Activated CD8-positive, alpha-beta T cell treated with anti-CD3 and anti-CD28 coated beads, Interleukin-2, amount 10 ng/mL, durations not matched to agents 7 days and 5 days (primary cell): ENCODE measurements at regions of chr1 and their contacts with region 1.

Region 1: DNA sequence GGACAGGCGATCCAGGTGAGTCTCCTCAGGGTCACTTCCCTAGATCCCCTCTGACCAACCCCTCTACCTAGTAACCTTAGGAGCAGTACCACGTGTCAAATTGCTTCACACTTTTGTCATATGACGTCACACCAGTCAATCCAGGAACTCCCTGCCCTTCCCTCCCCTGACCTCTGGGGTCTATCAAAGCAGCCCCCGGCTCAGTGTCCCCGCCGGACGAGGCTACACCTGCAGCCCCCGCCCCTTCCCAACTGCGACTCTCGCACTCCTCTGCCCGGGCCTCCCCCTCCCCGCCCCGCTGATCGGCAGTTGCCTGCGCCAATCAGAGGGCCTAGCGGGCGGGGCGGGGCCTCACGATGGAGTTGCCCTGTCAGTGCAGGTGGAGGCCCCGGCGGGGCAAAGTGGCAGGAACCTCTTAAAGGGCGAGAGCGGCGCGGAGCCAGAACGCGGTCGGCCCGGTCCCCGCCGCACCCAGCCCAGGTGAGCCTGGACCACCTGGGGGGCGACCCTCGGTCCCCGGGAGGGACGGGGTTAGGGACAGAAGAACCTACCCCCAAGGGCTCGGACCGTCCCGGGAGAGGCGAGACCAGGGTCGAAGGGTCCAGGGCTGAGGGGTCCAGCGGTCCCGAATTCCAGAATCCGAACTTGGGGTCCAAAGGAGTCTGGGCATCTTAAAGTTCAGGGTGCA is 27.5 kb upstream of the EPB41 start:
- DNase-seq: peak; percentile 92
- ATAC-seq: peak; percentile 81
- H3K4me3 Mint-ChIP-seq: peak overlapping the region; percentile 80
- H3K27ac Mint-ChIP-seq: peak overlapping the region; percentile 97
- H3K4me1 Mint-ChIP-seq: peaks cover 56% of the 10 kb centered on the region
- H3K27me3 Mint-ChIP-seq: no peaks in the 10 kb centered on the region

Region 2: GRCh38 chr1:28341591-28341990 is 545.3 kb before region 1 on chr1:
- CTCF ChIA-PET with region 1: no interaction called
- POLR2A ChIA-PET with region 1: no interaction called
- DNase-seq: no peak
- ATAC-seq: no peak
- H3K4me3 Mint-ChIP-seq: no peak overlapping the region
- H3K27ac Mint-ChIP-seq: no peak overlapping the region
- H3K4me1 Mint-ChIP-seq: peaks cover 20% of the 10 kb centered on the region
- H3K27me3 Mint-ChIP-seq: no peaks in the 10 kb centered on the region

Region 3: GRCh38 chr1:28775121-28775944 is 111.5 kb before region 1 on chr1:
- CTCF ChIA-PET with region 1: interaction called, 167 read pairs
- POLR2A ChIA-PET with region 1: no interaction called
- DNase-seq: peak; percentile 71
- ATAC-seq: peak; percentile 95
- H3K4me3 Mint-ChIP-seq: peak overlapping the region; percentile 63
- H3K27ac Mint-ChIP-seq: peak overlapping the region; percentile 43
- H3K4me1 Mint-ChIP-seq: peaks cover 11% of the 10 kb centered on the region
- H3K27me3 Mint-ChIP-seq: peaks cover 3% of the 10 kb centered on the region

Region 4: DNA sequence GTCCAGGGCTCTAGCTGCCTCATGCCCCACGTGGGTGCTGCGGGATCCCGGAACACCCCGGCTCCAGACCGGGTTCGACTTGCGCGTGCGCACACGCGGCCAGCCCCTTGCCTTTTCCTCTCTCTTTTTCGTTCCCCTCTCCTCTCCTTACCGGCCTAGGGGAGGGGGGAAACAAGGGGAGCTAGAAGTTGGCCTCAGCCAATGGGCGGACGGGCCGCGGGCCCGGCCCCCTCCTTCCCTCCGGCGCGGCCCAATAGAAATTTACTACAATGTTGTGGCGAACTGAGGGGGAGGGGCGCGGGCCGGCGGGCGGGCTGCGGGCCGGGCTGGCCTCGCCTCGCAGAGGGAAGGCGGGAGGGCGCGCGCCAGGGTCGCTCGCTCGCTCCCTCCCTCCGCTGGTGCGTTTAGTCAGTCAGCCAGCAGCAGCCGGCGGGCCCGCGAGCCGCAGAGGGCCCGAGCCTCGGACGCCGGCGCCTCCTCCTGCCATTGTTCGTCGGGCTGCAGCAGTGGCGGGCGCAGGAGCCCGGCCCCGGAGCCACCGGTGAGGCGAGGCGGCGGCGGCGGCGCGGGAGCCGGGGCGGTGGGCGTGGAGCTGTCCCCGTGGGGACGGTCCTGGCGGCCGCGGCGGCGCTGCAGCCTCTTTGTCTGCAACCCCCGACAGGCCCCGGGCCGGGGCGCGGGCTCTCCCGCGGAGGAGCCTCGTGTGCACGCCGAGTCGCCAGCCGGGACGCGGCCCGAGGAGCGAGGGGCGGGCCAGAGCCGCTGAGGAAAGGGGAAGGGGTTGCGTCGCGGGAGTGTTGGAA is 27.6 kb after region 1 on chr1 and contains the start of gene EPB41:
- CTCF ChIA-PET with region 1: interaction called, 11 read pairs
- POLR2A ChIA-PET with region 1: interaction called, 15 read pairs
- DNase-seq: peak; percentile 94
- ATAC-seq: peak; percentile 89
- H3K4me3 Mint-ChIP-seq: peak within 1 kb of the TSS; percentile 96
- H3K27ac Mint-ChIP-seq: peak within 1 kb of the TSS; percentile 94
- H3K4me1 Mint-ChIP-seq: peaks cover 41% of the 10 kb centered on the region
- H3K27me3 Mint-ChIP-seq: no peaks in the 10 kb centered on the region
- total RNA-seq, gene EPB41: 94.5 to 95.4 TPM

Region 5: DNA sequence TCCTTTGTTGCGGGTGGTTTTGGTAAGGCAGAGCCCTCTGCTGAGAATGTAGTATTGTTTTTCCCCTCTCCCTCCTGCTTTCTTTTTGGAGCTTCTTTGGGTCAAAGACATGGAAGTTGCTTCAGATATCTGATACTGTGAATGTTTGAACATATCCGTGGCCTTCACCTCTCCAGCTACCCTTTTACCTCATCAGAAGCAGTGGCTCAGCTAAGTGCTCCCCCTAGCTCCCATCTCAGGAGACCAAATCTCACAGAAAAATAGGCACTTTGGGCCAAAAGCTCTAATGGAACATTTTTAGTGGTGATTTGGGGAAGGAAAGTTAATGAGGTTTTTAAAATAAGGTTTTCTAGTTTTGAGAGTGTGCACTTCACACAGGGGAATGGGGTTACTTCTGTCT is 230.5 kb after region 1 on chr1:
- CTCF ChIA-PET with region 1: interaction called, 11 read pairs
- POLR2A ChIA-PET with region 1: no interaction called
- DNase-seq: no peak
- ATAC-seq: no peak
- H3K4me3 Mint-ChIP-seq: no peak overlapping the region
- H3K27ac Mint-ChIP-seq: no peak overlapping the region
- H3K4me1 Mint-ChIP-seq: no peaks in the 10 kb centered on the region
- H3K27me3 Mint-ChIP-seq: peaks cover 2% of the 10 kb centered on the region

Region 6: DNA sequence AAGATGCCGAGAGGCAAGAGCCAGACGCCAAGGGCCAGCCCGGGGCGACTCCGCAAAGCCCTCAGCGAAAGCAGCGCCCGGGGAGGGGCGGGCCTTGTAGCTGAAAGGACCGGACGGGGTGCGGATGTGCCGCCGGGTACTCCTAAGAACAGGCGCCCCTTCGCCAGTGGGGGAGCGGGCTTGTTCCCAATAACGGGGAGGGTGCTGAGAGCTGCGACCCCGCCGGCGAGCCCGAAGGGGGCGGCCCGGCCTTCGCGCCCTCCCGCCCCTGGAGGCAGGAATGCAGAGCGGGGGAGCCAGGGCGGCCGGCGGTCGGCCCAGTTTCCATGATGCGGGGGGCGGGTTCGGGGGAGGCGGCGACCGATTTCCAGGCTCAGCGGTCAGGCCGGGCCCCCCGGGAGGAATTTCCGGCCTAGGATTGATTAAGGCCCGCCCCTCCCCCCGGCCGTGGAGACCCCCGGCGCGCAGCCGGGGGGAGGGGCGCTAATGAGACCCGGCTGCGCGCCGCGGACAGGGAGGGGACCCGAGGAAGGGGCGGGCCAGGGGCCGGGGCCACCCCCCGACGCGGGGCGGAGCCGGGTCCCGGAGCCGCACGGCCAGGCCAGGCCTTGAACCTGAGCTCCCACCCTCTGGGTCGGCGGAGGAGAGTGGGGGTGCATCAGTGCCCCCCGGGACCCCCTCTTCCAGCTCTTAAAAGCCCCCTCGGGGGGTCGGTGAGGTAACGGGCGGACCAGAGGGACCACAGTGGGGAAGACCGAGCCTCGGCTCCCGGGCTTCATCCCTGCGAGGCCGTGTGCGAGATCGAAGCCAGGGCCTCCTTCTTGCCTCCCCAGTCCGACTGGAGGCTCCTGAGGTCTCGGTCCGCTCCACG is 237.7 kb after region 1 on chr1:
- CTCF ChIA-PET with region 1: interaction called, 10 read pairs
- POLR2A ChIA-PET with region 1: no interaction called
- DNase-seq: peak; percentile 74
- ATAC-seq: peak; percentile 66
- H3K4me3 Mint-ChIP-seq: peak overlapping the region; percentile 69
- H3K27ac Mint-ChIP-seq: no peak overlapping the region
- H3K4me1 Mint-ChIP-seq: peaks cover 10% of the 10 kb centered on the region
- H3K27me3 Mint-ChIP-seq: peaks cover 24% of the 10 kb centered on the region

Region 7: DNA sequence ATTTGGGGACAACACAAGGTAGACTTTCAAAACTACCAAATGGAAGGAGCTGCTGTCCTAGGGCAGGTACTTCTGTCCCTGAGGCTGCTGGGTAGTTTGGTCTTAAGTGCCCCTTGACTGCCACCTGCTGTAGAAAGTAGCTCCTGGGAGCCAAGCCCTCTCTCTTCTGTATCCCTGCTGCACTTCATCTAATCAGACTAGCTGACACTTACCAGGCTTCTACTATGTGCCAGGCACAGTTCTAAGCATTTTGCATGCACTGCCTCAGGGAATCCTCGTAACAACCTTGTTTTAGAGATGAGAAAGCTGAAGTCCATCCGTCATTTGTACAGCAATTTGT is 310.7 kb after region 1 on chr1:
- CTCF ChIA-PET with region 1: interaction called, 72 read pairs
- POLR2A ChIA-PET with region 1: no interaction called
- DNase-seq: peak; percentile 64
- ATAC-seq: peak; percentile 90
- H3K4me3 Mint-ChIP-seq: no peak overlapping the region
- H3K27ac Mint-ChIP-seq: no peak overlapping the region
- H3K4me1 Mint-ChIP-seq: peaks cover 25% of the 10 kb centered on the region
- H3K27me3 Mint-ChIP-seq: no peaks in the 10 kb centered on the region

Region 8: DNA sequence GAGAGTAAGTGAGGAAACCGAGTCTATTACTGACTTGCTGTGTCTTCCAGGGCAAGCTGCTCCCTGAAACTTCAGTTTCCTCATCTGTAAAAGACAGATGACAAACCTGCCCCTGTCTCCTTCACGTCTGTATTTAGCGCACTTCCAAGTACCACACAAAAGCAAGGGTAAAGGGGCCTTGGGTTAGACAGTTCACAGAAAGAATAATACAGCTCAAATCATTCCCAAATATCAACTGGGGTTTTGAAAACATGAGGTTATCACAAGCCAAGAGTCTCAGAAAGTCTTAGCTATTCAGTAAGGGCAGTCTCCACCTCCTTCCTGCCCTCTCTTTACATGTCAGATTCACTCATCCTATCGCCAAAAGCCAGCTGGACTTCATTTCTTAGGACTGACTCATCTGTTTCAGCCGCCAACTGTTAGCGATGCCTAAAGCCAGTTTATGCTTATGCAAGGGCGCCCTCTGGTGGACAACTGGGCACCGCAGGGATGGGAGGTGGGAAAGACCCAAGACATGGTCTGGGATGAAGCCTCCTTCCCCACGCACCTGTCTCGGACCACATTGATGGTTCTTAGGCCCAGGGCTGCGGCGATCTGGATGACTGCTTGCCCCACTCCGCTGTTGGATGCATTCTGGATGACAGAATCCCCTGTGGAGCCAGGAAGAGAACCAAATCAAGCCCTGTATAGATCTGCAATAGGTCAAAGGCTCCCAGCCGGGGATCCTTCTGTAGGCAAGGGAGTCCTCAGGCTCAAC is 315.9 kb after region 1 on chr1:
- CTCF ChIA-PET with region 1: interaction called, 72 read pairs
- POLR2A ChIA-PET with region 1: no interaction called
- DNase-seq: peak; percentile 92
- ATAC-seq: peak; percentile 95
- H3K4me3 Mint-ChIP-seq: no peak overlapping the region
- H3K27ac Mint-ChIP-seq: peak overlapping the region; percentile 36
- H3K4me1 Mint-ChIP-seq: peaks cover 19% of the 10 kb centered on the region
- H3K27me3 Mint-ChIP-seq: no peaks in the 10 kb centered on the region